ENCODE measurements at regions of chr18 and their contacts with region 1.

Region 1: GRCh38 chr18:44130376-44130942 is 550.2 kb upstream of the SETBP1 start:
- DNase-seq: peak; percentile 59
- H3K4me3 Mint-ChIP-seq: no peak overlapping the region
- H3K27ac Mint-ChIP-seq: no peak overlapping the region
- H3K4me1 Mint-ChIP-seq: peaks cover 19% of the 10 kb centered on the region
- H3K27me3 Mint-ChIP-seq: no peaks in the 10 kb centered on the region
- CTCF ChIP-seq: peak; percentile 78

Region 2: GRCh38 chr18:43620936-43621335 is 509.5 kb before region 1 on chr18:
- CTCF ChIA-PET with region 1: no interaction called
- intact Hi-C with region 1: loop called (anchors 5 kb)
- DNase-seq: peak; percentile 3
- H3K4me3 Mint-ChIP-seq: no peak overlapping the region
- H3K27ac Mint-ChIP-seq: no peak overlapping the region
- H3K4me1 Mint-ChIP-seq: peaks cover 9% of the 10 kb centered on the region
- H3K27me3 Mint-ChIP-seq: no peaks in the 10 kb centered on the region
- CTCF ChIP-seq: peak; percentile 40

Region 3: DNA sequence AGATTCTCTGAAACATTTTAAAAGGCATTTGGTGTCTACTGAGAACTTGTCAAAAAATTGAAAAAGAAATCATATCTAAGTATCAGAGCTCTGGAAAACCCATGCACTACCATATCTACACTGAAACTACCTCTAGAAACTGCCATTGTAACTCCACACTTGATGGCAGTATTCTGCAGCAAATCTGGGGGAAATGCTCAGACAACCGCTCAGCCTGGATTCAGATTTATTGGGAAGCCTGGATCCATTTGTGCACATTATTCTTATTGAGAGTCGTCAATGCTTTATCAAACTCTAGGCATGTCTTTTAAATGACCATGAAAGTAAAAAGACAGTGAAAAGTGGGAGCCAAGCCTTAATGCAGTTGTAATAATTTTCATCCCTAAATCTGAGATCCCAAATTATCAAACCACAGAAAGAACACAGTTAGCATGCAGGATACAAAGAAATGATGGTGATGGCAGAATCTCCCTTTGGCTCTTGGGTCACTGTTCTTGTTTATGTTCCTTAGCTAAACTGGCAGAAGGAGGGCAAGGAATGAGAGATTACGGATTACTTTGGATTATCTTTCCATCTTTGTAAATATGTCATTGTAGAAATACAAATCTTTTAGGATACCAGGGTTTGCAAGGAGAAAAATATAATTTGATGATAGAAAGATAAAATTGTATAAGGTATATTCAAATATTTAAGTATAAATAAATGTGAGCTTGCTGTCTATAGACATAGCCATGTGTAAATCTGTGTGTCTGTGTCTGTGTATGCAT is 341.0 kb before region 1 on chr18:
- CTCF ChIA-PET with region 1: no interaction called
- intact Hi-C with region 1: loop called (anchors 5 kb)
- DNase-seq: no peak
- H3K4me3 Mint-ChIP-seq: no peak overlapping the region
- H3K27ac Mint-ChIP-seq: no peak overlapping the region
- H3K4me1 Mint-ChIP-seq: peaks cover 37% of the 10 kb centered on the region
- H3K27me3 Mint-ChIP-seq: no peaks in the 10 kb centered on the region
- CTCF ChIP-seq: no peak

Region 4: GRCh38 chr18:44149706-44150105 is 19.2 kb after region 1 on chr18:
- CTCF ChIA-PET with region 1: no interaction called
- intact Hi-C with region 1: no loop called
- DNase-seq: peak; percentile 31
- H3K4me3 Mint-ChIP-seq: no peak overlapping the region
- H3K27ac Mint-ChIP-seq: peak overlapping the region; percentile 62
- H3K4me1 Mint-ChIP-seq: peaks cover 36% of the 10 kb centered on the region
- H3K27me3 Mint-ChIP-seq: no peaks in the 10 kb centered on the region
- CTCF ChIP-seq: no peak

Region 5: GRCh38 chr18:44325903-44326635 is 195.6 kb after region 1 on chr18:
- CTCF ChIA-PET with region 1: no interaction called
- intact Hi-C with region 1: loop called (anchors 1 kb)
- DNase-seq: peak; percentile 78
- H3K4me3 Mint-ChIP-seq: no peak overlapping the region
- H3K27ac Mint-ChIP-seq: no peak overlapping the region
- H3K4me1 Mint-ChIP-seq: no peaks in the 10 kb centered on the region
- H3K27me3 Mint-ChIP-seq: no peaks in the 10 kb centered on the region
- CTCF ChIP-seq: peak; percentile 63

Region 6: DNA sequence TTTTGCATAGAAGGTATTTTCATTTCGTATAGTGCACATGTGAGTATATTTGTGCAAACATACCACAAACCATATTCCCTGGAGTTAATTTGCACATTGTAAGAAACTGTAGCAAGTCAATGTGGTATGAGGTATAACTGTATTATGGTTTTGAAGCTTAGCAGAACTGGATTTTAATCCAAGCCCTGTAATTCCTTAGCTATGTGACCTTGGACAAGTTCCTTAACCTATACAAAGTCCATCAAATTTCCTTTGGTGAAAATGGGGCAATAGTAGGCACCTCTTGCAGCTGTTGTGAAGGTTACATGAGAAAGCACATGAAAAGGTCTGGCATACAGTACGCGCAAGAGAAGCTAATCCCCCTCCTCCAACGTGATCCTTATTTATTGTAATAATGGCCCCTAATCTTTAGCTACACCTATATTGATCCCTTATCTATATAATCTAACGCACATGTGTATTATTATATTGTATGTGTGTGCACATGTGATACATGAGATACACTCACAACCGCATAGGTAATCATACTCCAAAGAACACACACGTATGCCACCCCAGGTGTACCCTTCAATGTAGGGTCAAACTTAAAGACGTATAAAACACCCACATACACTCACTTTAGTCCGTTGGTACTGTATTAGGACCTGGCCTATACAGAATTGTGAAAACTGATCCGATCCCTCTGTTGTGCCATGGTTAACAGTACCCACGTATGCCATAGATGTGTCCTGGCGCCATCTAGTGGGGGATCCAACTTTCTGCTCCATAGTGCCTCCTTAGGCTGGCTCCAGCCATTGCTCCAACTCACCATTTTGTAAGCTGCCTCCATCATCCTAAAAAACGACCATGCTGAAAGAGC is 1082.0 kb after region 1 on chr18:
- CTCF ChIA-PET with region 1: no interaction called
- intact Hi-C with region 1: loop called (anchors 10 kb)
- DNase-seq: peak; percentile 87
- H3K4me3 Mint-ChIP-seq: no peak overlapping the region
- H3K27ac Mint-ChIP-seq: no peak overlapping the region
- H3K4me1 Mint-ChIP-seq: no peaks in the 10 kb centered on the region
- H3K27me3 Mint-ChIP-seq: no peaks in the 10 kb centered on the region
- CTCF ChIP-seq: peak; percentile 99